PC-3 (cell line): ENCODE measurements at regions of chr7 and their contacts with region 1.

Region 1: DNA sequence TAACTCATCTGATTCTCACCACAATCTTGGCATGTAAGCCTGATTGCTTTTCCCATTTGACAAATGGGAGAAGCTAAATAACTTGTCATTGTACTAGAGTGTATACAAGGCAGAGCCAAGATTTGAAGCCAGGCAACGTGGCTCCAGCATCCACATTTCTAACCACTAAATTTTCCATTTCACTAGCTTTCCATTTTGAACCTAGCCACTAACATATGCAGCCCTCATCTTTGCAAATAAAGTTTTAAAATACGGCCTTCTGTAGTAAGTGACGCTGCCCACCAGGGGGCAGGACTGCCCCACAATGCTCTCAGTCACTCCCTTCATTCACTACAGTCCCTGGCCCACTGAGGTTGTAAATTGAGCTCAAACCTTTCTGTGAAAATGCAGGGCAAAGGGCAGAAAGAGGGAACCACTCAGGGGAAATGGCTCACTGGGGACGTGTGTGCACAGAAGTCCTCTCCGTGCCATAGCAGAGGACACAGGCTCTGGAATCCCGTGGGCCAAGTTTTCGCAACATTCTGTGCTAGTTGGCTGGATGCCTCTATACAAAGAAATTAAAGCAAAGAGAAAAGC is 315.7 kb downstream of the TNS3 start:
- DNase-seq: peak; percentile 80
- ATAC-seq: peak; percentile 85
- H3K4me3 ChIP-seq: no peak overlapping the region
- H3K27ac ChIP-seq: no peak overlapping the region
- H3K4me1 ChIP-seq: peaks cover 9% of the 10 kb centered on the region
- H3K27me3 ChIP-seq: no peaks in the 10 kb centered on the region
- CTCF ChIP-seq: peak; percentile 94

Region 2: DNA sequence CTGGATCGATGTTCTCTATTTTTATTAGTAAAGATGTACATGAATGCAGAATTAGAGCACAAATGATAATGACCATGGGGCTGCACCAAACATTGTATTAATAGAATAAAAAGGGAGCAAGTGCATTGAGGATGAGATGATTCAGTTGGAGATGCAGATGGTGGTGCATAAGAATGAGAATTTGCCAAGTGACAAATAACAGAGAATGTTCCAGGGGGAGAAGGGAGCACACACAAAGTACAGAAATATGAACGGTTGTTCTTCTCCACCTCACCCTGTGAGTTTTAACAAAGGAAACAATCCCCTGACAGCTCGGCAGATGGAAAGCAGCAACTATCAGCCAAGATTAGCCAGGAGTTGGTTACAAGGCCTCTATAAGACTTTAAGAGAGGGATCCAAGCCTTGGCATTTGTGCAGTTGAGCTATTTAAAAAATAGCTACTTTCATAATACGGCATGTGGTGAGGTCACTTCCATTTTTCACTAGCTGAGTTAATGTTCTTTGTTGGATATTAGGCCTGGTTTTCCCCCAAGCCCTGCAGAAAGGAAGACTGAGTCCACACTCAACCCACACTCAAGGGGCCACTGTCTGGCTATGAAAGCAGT is 146.9 kb before region 1 on chr7:
- CTCF ChIA-PET with region 1: no interaction called
- POLR2A ChIA-PET with region 1: no interaction called
- intact Hi-C with region 1: no loop called
- DNase-seq: no peak
- ATAC-seq: no peak
- H3K4me3 ChIP-seq: no peak overlapping the region
- H3K27ac ChIP-seq: no peak overlapping the region
- H3K4me1 ChIP-seq: no peaks in the 10 kb centered on the region
- H3K27me3 ChIP-seq: no peaks in the 10 kb centered on the region
- CTCF ChIP-seq: no peak

Region 3: DNA sequence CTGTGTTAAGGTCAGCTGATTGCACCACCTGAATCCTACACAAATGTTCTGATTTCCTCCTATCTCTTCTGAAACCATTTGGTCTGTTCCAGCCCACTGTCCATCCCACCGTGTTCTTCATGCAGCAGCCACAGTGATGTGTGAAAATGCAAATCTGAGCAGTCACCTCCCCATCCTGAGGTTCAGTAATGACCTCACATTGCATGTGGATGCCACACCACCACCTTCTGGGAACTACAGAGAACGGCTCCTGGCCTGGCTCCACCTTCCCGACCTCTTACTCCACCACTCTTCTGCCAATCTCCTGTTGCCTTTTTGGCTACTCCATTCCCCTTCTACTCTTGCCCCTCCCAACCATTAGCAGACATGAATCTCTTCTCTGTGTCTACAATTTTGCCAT is 71.3 kb after region 1 on chr7:
- CTCF ChIA-PET with region 1: no interaction called
- POLR2A ChIA-PET with region 1: no interaction called
- intact Hi-C with region 1: loop called (anchors 5 kb)
- DNase-seq: no peak
- ATAC-seq: peak; percentile 30; the same call in 1 of the 2 replicates
- H3K4me3 ChIP-seq: no peak overlapping the region
- H3K27ac ChIP-seq: no peak overlapping the region
- H3K4me1 ChIP-seq: no peaks in the 10 kb centered on the region
- H3K27me3 ChIP-seq: no peaks in the 10 kb centered on the region
- CTCF ChIP-seq: 0 out of 2 replicates have a peak, but pooled peaks have one; percentile 16

Region 4: GRCh38 chr7:47435889-47436312 is 169.7 kb after region 1 on chr7:
- CTCF ChIA-PET with region 1: interaction called, 11 read pairs
- POLR2A ChIA-PET with region 1: no interaction called
- intact Hi-C with region 1: loop called (anchors 1 kb)
- DNase-seq: peak; percentile 67
- ATAC-seq: peak; percentile 95
- H3K4me3 ChIP-seq: no peak overlapping the region
- H3K27ac ChIP-seq: no peak overlapping the region
- H3K4me1 ChIP-seq: no peaks in the 10 kb centered on the region
- H3K27me3 ChIP-seq: no peaks in the 10 kb centered on the region
- CTCF ChIP-seq: peak; percentile 76

Region 5: GRCh38 chr7:47581806-47582763 is 315.9 kb after region 1 on chr7 and contains the start of gene TNS3:
- CTCF ChIA-PET with region 1: no interaction called
- POLR2A ChIA-PET with region 1: no interaction called
- intact Hi-C with region 1: loop called (anchors 5 kb)
- DNase-seq: peak; percentile 57
- ATAC-seq: peak; percentile 38
- H3K4me3 ChIP-seq: peak within 1 kb of the TSS; percentile 89
- H3K27ac ChIP-seq: peak within 1 kb of the TSS; percentile 95
- H3K4me1 ChIP-seq: peaks cover 52% of the 10 kb centered on the region
- H3K27me3 ChIP-seq: no peaks in the 10 kb centered on the region
- CTCF ChIP-seq: 0 out of 2 replicates have a peak, but pooled peaks have one; percentile 17
- total RNA-seq, gene TNS3: 71.4 and 72.3 TPM in 2 replicates

Region 6: GRCh38 chr7:47846117-47846836 is 580.1 kb after region 1 on chr7:
- CTCF ChIA-PET with region 1: interaction called, 12 read pairs
- POLR2A ChIA-PET with region 1: no interaction called
- intact Hi-C with region 1: no loop called
- DNase-seq: peak; percentile 93
- ATAC-seq: peak; percentile 80
- H3K4me3 ChIP-seq: peak overlapping the region; percentile 11; the same call in 1 of the 2 replicates
- H3K27ac ChIP-seq: peak overlapping the region; percentile 84
- H3K4me1 ChIP-seq: peaks cover 41% of the 10 kb centered on the region
- H3K27me3 ChIP-seq: no peaks in the 10 kb centered on the region
- CTCF ChIP-seq: no peak